ENCODE measurements at regions of chr17 and their contacts with region 1.

Region 1: DNA sequence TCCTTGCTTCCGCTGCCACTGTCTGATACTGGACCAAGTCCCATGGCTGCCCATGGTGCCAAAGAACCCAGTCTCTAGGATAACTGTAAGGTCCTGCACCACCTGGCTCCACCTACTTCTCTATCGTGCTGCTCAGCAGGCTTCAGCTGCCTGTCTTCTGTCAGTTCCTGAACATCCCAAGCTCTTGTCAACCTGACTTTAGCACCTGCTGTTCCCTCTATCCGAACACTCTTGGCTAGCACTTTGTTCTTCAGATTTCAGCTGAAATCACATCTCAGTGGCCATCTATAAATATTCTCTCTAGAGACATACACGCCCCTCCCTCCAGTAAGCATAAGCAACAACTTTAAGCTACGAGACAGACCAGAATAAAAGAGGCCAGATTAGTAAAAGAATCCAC is 15.0 kb upstream of the TMEM101 start:
- DNase-seq: no peak
- H3K4me3 ChIP-seq: no peak overlapping the region
- H3K27ac ChIP-seq: no peak overlapping the region
- H3K4me1 ChIP-seq: no peaks in the 10 kb centered on the region
- H3K27me3 ChIP-seq: no peaks in the 10 kb centered on the region
- CTCF ChIP-seq: no peak

Region 2: DNA sequence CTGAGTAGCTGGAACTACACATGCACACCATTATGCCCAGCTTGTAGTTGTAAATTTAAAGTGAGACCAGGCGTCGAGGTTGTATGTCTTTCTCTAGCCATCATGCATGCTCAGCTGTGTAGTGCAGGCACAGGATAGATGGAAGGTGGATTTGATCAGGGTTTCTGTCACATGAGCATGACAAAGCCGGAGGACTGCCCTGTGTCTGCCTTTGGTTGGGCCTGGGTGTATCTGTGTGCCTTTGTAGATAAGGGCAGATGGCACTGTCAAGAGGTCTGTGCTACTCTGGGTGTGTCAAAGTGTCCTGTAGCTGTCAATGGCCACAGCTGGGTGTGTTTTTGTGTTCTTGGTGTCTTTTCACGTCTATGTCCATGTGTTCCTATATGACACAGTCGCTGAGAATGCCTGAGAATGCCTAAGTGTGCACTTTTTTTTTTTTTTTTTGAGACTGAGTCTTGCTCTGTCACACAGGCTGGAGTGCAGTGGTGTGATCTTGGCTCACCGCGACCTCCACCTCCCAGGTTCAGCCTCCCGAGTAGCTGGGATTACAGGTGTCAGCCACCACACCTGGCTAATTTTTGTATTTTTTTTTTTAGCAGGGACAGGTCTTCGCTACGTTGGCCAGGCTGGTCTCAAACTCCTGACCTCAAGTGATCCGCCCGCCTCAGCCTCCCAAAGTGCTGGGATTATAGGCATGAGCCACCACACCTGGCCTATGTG is 29.4 kb before region 1 on chr17:
- intact Hi-C with region 1: loop called (anchors 1 kb)
- DNase-seq: no peak
- H3K4me3 ChIP-seq: no peak overlapping the region
- H3K27ac ChIP-seq: no peak overlapping the region
- H3K4me1 ChIP-seq: peaks cover 0 to 6% of the 10 kb centered on the region in 2 donors
- H3K27me3 ChIP-seq: no peaks in the 10 kb centered on the region
- CTCF ChIP-seq: no peak